Breast epithelium (tissue), 4 donors: ENCODE measurements at regions of chr7 and their contacts with region 1.

Region 1: GRCh38 chr7:94503097-94503496 is 6.5 kb upstream of the CASD1 start:
- DNase-seq: no peak
- H3K4me3 ChIP-seq: no peak overlapping the region
- H3K27ac ChIP-seq: no peak overlapping the region
- H3K4me1 ChIP-seq: no peaks in the 10 kb centered on the region
- H3K27me3 ChIP-seq: no peaks in the 10 kb centered on the region
- CTCF ChIP-seq: no peak
- POLR2A ChIP-seq: no peak

Region 2: GRCh38 chr7:94307399-94308048 is 195.6 kb before region 1 on chr7:
- intact Hi-C with region 1: loop called (anchors 5 kb)
- DNase-seq: no peak
- H3K4me3 ChIP-seq: no peak overlapping the region
- H3K27ac ChIP-seq: no peak overlapping the region
- H3K4me1 ChIP-seq: no peaks in the 10 kb centered on the region
- H3K27me3 ChIP-seq: no peaks in the 10 kb centered on the region
- CTCF ChIP-seq: no peak
- POLR2A ChIP-seq: no peak

Region 3: GRCh38 chr7:96287132-96287531 is 1784.0 kb after region 1 on chr7:
- intact Hi-C with region 1: no loop called
- DNase-seq: no peak
- H3K4me3 ChIP-seq: no peak overlapping the region
- H3K27ac ChIP-seq: no peak overlapping the region
- H3K4me1 ChIP-seq: no peaks in the 10 kb centered on the region
- H3K27me3 ChIP-seq: no peaks in the 10 kb centered on the region
- CTCF ChIP-seq: no peak
- POLR2A ChIP-seq: no peak